Posterior vena cava (tissue), 2 donors: ENCODE measurements at regions of chr17 and their contacts with region 1.

Region 1: DNA sequence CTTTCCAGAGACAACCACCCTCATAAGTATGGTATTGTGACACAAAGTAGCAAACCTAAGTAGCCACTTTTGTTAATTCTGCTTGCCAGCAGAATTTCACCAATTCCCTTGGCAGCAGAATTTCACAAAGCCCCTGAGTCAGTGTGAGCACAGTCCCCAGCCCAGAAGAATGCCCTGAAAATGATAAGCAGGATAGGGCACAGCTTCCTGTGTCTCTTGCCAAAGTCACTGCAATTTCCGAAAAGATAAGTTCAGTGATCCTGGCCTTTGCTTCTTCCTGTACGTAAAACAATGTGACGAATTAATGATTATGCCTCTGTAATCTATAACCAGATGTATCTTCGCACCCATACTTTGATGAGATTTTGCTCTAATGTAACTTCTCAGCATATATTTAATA is 16.0 kb upstream of the WIPF2 start:
- DNase-seq: no peak

Region 2: GRCh38 chr17:40191237-40192208 is 11.6 kb before region 1 on chr17:
- intact Hi-C with region 1: no loop called
- DNase-seq: peak; percentile 91

Region 3: GRCh38 chr17:40287494-40288369 is 84.6 kb after region 1 on chr17 and contains the start of gene CDC6:
- intact Hi-C with region 1: loop called (anchors 5 kb)
- DNase-seq: peak; percentile 100
- total RNA-seq, gene CDC6: 1.4 to 2.5 TPM